Activated CD4-positive, alpha-beta memory T cell treated with anti-CD3 and anti-CD28 coated beads for 36 hours (primary cell): ENCODE measurements at regions of chr13 and their contacts with region 1.

Region 1: DNA sequence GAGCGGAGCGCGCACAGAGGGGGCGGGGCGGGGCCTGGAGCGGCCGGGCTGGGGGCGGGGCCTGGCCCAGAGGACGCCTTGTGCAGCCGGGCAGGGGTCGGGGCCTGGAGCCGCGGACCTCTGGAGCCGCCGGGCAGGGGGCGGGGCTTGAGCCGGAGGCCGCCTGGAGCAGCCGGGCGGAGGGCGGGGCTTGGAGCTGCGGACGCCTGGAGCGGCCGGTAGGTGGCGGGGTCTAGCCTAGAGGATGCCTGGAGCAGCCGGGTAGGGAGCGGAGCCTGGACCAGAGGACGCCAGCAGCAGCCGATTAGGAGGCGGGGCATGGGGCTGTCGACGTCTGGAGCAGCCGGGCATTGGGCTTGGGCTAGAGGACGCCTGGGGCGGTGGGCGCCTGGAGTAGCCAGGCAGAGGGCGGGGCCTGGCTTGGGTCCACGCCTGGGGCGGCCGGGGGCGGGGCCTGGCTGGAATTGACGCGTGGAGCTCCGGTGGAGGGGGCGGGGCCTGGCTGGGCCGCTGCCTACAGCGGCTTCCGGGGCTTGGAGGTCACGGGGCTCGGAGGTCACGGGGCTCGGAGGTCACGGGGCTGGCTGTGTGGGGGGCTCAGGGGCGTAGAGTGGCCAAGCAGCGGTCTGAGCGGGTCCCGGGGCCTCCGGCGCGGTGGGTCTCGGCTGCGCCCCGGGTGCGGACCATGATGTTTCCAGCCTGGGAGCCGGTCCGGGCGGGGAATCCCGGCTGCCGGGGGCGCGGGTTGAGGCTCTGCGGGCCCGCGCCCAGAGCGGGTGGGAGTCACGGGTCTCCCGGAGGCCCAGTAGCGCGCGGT is at the start of gene ANKRD10:
- DNase-seq: peak; percentile 98
- H3K4me3 Mint-ChIP-seq: peak within 1 kb of the TSS; percentile 87
- H3K27ac Mint-ChIP-seq: peak within 1 kb of the TSS; percentile 94
- H3K4me1 Mint-ChIP-seq: peaks cover 46% of the 10 kb centered on the region
- H3K27me3 Mint-ChIP-seq: no peaks in the 10 kb centered on the region
- total RNA-seq, gene ANKRD10: 83.9 to 97.8 TPM

Region 2: GRCh38 chr13:110615322-110616102 is 299.8 kb before region 1 on chr13 and contains the start of gene NAXD:
- CTCF ChIA-PET with region 1: no interaction called
- POLR2A ChIA-PET with region 1: interaction called, 7 read pairs
- intact Hi-C with region 1: loop called (anchors 1 kb)
- DNase-seq: peak; percentile 93
- H3K4me3 Mint-ChIP-seq: peak within 1 kb of the TSS; percentile 94
- H3K27ac Mint-ChIP-seq: peak within 1 kb of the TSS; percentile 88
- H3K4me1 Mint-ChIP-seq: peaks cover 48% of the 10 kb centered on the region
- H3K27me3 Mint-ChIP-seq: no peaks in the 10 kb centered on the region
- total RNA-seq, gene NAXD: 22.6 to 22.9 TPM

Region 3: GRCh38 chr13:110771194-110771593 is 144.1 kb before region 1 on chr13:
- CTCF ChIA-PET with region 1: no interaction called
- POLR2A ChIA-PET with region 1: no interaction called
- intact Hi-C with region 1: no loop called
- DNase-seq: no peak
- H3K4me3 Mint-ChIP-seq: no peak overlapping the region
- H3K27ac Mint-ChIP-seq: no peak overlapping the region
- H3K4me1 Mint-ChIP-seq: peaks cover 2% of the 10 kb centered on the region
- H3K27me3 Mint-ChIP-seq: peaks cover 8% of the 10 kb centered on the region

Region 4: GRCh38 chr13:110965038-110965754 is 49.9 kb after region 1 on chr13:
- CTCF ChIA-PET with region 1: interaction called, 3 read pairs
- POLR2A ChIA-PET with region 1: no interaction called
- intact Hi-C with region 1: loop called (anchors 1 kb)
- DNase-seq: peak; percentile 64
- H3K4me3 Mint-ChIP-seq: peak overlapping the region; percentile 25
- H3K27ac Mint-ChIP-seq: peak overlapping the region; percentile 81
- H3K4me1 Mint-ChIP-seq: peaks cover 25% of the 10 kb centered on the region
- H3K27me3 Mint-ChIP-seq: peaks cover 6% of the 10 kb centered on the region

Region 5: DNA sequence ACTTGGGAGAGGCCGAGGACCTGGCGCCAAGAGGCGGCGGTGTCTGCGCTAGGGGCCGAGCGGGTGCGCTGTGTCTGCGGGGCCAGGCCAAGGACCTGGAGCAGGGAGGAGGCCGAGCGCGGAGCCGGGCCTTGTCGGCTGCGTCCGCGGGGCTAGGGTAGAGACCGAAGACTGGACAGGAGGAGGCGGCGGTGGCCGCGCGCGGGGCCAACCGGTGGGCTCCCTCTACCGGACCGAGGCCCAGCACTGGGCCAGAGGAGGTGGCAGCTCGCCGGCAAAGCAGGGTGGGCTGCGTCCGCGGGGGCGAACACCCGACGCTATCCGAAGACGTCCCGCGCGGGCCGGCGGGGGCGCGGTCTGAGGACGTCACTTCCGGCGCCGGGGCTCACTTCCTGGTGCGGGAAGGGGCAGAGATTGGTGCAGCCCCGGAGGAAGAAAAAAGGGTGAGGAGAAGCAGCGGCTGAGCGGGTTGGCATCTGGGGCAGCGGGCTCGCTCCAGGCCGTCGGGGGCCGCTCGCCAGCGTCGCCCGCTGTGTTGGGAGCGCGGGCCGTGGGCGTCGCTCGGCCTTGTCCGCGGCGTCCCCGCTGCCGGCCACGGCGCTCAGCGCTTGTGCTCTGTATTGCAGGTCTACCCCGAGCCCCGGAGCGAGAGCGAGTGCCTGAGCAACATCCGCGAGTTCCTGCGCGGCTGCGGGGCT is 238.2 kb after region 1 on chr13:
- CTCF ChIA-PET with region 1: interaction called, 4 read pairs
- POLR2A ChIA-PET with region 1: interaction called, 3 read pairs
- intact Hi-C with region 1: loop called (anchors 1 kb)
- DNase-seq: peak; percentile 95
- H3K4me3 Mint-ChIP-seq: peak overlapping the region; percentile 87
- H3K27ac Mint-ChIP-seq: peak overlapping the region; percentile 89
- H3K4me1 Mint-ChIP-seq: peaks cover 28% of the 10 kb centered on the region
- H3K27me3 Mint-ChIP-seq: no peaks in the 10 kb centered on the region

Region 6: GRCh38 chr13:111184458-111185401 is 269.5 kb after region 1 on chr13:
- CTCF ChIA-PET with region 1: no interaction called
- POLR2A ChIA-PET with region 1: no interaction called
- intact Hi-C with region 1: loop called (anchors 10 kb)
- DNase-seq: peak; percentile 60
- H3K4me3 Mint-ChIP-seq: peak overlapping the region; percentile 48
- H3K27ac Mint-ChIP-seq: peak overlapping the region; percentile 80
- H3K4me1 Mint-ChIP-seq: peaks cover 88% of the 10 kb centered on the region
- H3K27me3 Mint-ChIP-seq: no peaks in the 10 kb centered on the region

Region 7: GRCh38 chr13:111216166-111216960 is 301.1 kb after region 1 on chr13:
- CTCF ChIA-PET with region 1: no interaction called
- POLR2A ChIA-PET with region 1: no interaction called
- intact Hi-C with region 1: loop called (anchors 1 kb)
- DNase-seq: peak; percentile 51
- H3K4me3 Mint-ChIP-seq: no peak overlapping the region
- H3K27ac Mint-ChIP-seq: no peak overlapping the region
- H3K4me1 Mint-ChIP-seq: peaks cover 24% of the 10 kb centered on the region
- H3K27me3 Mint-ChIP-seq: no peaks in the 10 kb centered on the region